OCI-LY7 (cell line): ENCODE measurements at regions of chr16 and their contacts with region 1.

Region 1: DNA sequence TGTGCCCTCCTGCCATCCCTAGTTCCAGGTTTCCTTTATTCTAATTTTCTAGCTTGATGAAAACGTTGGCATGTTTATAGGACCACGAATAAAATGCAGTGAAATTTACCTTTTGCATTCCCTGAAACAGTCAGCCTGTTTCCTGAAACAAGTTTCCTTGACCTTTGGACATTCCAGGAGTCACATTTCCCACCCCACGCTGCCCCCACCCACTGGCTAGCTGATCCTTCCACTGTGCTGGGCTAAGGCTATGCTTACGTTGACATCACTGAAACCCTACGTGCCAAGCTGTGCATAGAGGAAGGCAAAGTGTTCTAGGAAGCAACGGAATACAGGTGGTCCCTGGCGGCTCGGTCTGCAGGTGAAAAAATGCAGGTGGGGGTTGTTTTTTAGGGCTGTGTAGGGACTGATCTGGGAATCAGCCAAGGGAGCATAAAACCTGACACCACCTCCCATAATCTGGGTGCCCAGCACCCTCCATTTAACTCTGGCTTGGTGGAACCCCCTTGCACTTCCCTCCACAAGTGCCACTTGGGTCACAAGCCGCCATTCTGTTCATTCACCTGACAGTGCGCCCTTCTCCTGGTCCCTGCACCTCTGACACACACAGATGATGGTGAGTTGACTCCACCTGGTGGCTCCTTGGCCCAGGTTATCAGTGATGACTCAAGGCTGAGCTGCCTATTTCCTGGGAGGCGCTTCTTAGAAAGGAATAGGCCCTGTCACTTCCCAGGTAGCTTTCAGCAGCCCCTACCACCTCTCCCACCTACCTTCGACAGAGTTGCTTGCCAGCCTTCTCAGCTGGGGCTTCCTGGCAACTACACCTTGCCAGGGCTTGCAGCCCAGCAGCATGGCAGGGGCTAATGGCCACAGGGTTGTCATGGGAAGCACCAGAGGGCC is 83.7 kb downstream of the N4BP1 start:
- DNase-seq: peak; percentile 58
- H3K4me3 ChIP-seq: no peak overlapping the region
- H3K27ac ChIP-seq: no peak overlapping the region
- H3K4me1 ChIP-seq: peaks cover 6% of the 10 kb centered on the region
- CTCF ChIP-seq: peak; percentile 65

Region 2: DNA sequence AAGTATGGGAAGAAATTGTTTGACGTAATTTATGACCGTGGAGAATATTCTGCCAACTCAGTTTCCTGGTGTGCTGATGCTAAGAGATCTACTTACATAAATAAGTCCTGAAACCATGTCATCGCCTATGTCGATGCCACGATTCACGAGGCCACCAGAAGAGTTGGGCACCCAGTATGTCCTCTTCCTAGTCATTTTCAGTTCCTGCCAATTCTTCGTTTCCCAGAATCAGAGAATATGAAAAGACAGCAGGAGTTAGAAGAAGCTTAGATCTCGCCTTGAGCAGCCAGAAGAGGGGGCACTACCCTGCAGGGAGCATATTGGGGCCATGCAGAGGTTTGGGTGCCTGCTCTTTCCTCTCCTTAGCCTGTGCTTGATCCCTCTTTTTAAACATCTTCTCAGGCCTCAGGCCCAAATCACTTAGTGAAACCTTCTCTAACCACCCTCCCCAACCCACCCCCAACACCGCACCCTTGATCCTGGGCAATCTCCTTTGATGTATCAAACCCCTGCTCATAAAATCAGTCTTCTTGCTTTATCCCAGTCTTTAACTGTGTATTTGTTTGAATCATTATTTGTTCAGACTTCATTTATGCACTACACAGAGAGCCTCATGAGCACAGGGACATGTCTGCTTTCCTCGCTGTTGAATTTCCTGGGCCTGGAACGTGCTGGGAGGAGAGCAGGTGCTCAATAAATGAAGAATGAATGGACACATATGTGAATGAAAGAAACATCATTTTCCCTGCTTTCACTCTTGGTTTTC is 294.4 kb before region 1 on chr16:
- CTCF ChIA-PET with region 1: no interaction called
- POLR2A ChIA-PET with region 1: no interaction called
- intact Hi-C with region 1: loop called (anchors 10 kb)
- DNase-seq: peak; percentile 19
- H3K4me3 ChIP-seq: no peak overlapping the region
- H3K27ac ChIP-seq: no peak overlapping the region
- H3K4me1 ChIP-seq: no peaks in the 10 kb centered on the region
- CTCF ChIP-seq: peak; percentile 64

Region 3: GRCh38 chr16:48501516-48502382 is 24.6 kb before region 1 on chr16:
- CTCF ChIA-PET with region 1: no interaction called
- POLR2A ChIA-PET with region 1: interaction called, 11 read pairs
- intact Hi-C with region 1: no loop called
- DNase-seq: no peak
- H3K4me3 ChIP-seq: no peak overlapping the region
- H3K27ac ChIP-seq: no peak overlapping the region
- H3K4me1 ChIP-seq: no peaks in the 10 kb centered on the region
- CTCF ChIP-seq: no peak

Region 4: DNA sequence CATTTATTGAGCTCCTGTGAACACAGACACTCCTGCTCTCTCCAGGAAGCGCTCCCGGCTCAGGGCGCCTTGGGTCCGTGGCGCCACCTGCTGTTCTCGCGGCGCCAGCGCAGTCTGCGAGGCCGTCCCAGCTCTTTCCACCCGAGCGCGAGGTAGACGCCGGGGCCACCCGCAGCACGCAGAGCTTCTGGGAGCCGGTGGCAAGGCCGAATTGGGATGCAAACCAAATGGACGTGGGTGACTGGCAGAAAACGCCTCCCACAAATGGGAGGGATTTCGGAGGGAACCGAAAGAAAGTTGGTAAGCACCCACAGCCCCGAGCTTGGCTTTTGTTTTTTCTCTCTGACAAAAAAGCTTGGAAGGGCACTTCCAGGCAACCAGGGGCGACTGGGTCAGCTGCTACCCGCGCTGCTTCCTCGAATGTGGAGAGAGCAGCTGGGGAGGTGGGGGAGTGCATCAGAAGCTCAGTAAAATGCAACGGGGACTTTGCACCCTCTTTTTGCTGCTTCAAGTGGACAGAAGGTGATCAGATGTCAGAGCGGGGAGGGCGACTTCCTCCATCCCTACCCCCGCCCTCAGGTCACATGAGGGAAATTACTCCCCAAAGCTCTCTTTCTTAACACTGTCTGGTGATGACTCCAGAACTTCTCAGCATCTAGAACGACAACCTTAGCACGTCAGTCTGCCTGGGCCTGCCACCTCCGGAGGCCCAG is 97.2 kb after region 1 on chr16:
- CTCF ChIA-PET with region 1: interaction called, 3 read pairs
- POLR2A ChIA-PET with region 1: no interaction called
- intact Hi-C with region 1: loop called (anchors 5 kb)
- DNase-seq: peak; percentile 73
- H3K4me3 ChIP-seq: peak overlapping the region; percentile 46
- H3K27ac ChIP-seq: no peak overlapping the region
- H3K4me1 ChIP-seq: peaks cover 8% of the 10 kb centered on the region
- CTCF ChIP-seq: peak; percentile 94

Region 5: DNA sequence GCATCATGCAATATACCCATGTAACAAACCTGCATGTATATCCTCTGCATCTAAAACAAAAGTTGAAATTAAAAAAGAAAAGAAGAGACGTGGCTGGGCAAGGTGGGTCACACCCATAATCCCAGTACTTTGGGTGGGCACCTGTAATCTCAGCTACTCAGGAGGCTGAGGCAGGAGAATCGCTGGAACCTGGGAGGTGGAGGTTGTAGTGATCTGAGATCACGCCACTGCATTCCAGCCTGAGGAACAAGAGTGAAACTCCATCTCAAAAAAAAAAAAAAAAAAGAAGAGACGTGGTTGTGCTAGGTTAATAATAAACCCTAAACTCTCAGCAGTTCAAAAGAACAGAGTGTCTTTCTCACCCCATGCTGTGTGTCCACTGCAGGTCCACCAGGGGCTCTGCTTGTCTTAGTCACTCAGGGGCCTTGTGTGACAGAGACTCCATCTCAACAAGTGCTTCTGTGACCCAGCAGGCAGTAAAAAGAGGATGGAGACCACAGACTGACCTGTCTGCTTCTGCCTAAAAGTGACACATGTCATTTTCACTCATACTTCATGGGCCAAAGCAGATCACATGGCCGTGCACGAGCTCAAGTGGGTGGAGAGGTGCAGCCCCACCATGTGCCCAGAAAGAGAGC is 105.9 kb after region 1 on chr16:
- CTCF ChIA-PET with region 1: no interaction called
- POLR2A ChIA-PET with region 1: no interaction called
- intact Hi-C with region 1: loop called (anchors 5 kb)
- DNase-seq: no peak
- H3K4me3 ChIP-seq: no peak overlapping the region
- H3K27ac ChIP-seq: no peak overlapping the region
- H3K4me1 ChIP-seq: no peaks in the 10 kb centered on the region
- CTCF ChIP-seq: no peak